Calu3 (cell line): ENCODE measurements at regions of chr20 and their contacts with region 1.

Region 1: DNA sequence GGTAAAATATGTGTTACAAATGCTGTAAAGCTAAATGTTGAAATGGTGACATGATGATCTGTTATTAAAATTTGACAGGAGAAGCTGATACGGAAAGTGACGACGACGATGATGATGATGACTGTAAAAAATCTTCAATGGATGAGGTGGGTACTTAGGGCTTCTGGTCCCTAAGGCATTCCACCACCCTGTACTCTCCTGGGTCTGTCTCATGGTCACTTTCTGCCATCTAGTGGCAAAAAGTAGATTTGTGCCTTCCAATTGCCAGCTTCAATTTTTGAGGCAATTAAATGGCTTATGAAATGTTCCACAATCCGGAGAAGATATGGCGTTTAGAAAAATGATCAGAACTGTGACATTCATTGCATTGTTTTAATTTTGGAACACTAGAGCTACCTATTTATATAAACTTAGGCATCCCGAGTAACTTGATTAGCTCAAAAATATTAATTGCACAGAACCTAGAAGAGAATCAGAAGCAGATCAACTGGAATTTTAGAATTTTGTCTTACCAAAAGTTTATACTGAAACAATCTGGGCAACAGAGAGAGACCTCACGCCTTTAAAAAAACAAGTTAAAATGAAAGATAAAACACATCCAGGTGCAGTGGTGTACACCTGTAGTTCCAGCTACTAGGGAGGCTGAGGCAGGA is 346.5 kb upstream of the PLCB4 start:
- DNase-seq: peak; percentile 33
- H3K4me3 Mint-ChIP-seq: no peak overlapping the region
- H3K27ac Mint-ChIP-seq: no peak overlapping the region
- H3K4me1 Mint-ChIP-seq: no peaks in the 10 kb centered on the region
- H3K27me3 Mint-ChIP-seq: no peaks in the 10 kb centered on the region
- CTCF ChIP-seq: peak; percentile 45

Region 2: DNA sequence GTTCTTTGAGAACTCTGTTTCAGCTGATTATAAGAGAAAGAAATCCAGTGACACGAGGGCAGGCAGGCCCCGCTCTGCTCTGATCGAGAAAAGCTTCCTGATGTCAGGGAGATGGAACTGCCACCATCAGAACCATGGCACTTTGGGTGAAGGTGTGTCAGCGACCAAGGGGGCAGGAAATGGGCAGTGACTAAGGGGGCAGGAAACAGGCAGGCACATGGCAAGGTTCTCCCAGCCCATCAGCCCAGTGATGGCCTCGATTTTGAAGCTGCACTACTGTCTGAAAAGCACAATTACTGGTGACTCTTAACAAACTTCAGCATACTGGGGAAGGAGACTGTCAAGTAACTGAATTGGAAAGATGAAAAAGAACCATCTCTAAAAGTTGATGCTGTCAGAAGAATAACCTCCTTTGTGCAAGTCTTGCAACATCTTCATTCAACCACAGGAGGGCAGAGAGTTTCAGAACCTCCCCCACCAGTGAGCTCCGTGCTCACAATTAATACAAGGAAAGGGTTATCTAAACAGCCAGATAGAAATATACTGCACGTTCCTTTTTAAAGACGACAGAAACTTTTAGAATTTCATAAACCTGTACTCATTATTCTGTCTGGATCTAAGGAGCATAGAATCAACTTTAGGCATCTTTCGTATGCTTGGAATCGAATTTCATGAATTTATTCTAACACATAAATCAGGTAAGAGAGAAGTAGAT is 741.9 kb before region 1 on chr20:
- CTCF ChIA-PET with region 1: interaction called, 8 read pairs
- intact Hi-C with region 1: loop called (anchors 1 kb)
- DNase-seq: peak; percentile 12
- H3K4me3 Mint-ChIP-seq: no peak overlapping the region
- H3K27ac Mint-ChIP-seq: no peak overlapping the region
- H3K4me1 Mint-ChIP-seq: peaks cover 7% of the 10 kb centered on the region
- H3K27me3 Mint-ChIP-seq: no peaks in the 10 kb centered on the region
- CTCF ChIP-seq: no peak

Region 3: DNA sequence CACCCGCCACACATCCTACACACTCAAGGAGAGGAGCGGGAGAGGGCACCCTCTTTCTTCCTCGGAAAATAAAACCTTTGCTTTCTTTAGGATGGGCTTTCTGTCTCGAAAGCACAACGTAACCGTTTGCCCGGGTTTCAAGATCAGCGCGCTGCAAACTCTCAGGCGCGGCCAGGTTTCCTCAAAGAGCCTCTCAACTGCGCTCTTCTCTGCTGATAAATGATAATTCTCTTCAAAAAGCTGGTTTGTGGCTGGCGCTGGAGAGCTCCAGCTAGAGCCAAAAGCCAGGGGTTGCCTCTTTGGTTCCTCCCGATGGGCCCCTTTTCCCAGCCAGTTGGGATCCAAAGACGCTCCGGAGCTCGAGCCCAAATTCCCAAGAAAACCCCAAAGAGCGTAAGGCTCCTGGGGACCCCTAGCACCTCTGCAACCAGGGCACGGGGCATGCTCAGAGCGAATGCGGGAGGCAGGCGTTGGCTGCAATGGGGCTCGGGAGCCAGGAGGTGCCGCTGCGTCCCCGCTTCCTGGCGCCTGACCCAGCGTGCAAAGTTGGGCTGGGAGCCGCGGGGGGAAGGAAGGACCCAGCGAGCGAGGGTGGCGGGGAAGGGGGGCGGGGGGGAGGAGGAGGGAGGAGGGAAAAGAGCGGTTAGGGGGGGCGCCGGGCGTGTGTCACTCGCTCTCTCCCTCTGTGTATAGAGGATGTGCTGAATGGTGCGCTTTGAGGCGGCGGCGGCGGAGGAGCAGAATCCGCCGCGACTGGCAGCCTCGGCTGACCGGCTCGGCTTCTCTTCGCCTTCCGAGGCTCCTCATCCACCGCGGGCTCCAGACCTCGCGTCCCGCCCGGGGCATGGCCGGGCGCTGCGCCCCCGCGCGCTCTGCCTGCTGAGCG is 590.6 kb before region 1 on chr20 and contains the start of gene PLCB1:
- CTCF ChIA-PET with region 1: interaction called, 7 read pairs
- intact Hi-C with region 1: loop called (anchors 1 kb)
- DNase-seq: peak; percentile 77
- H3K4me3 Mint-ChIP-seq: peak within 1 kb of the TSS; percentile 68
- H3K27ac Mint-ChIP-seq: no peak within 1 kb of the TSS
- H3K4me1 Mint-ChIP-seq: no peaks in the 10 kb centered on the region
- H3K27me3 Mint-ChIP-seq: peaks cover 61% of the 10 kb centered on the region
- CTCF ChIP-seq: peak; percentile 71
- total RNA-seq, gene PLCB1: 6.0 and 7.6 TPM in 2 replicates

Region 4: GRCh38 chr20:8389381-8390036 is 332.9 kb before region 1 on chr20:
- CTCF ChIA-PET with region 1: no interaction called
- intact Hi-C with region 1: loop called (anchors 5 kb)
- DNase-seq: no peak
- H3K4me3 Mint-ChIP-seq: no peak overlapping the region
- H3K27ac Mint-ChIP-seq: no peak overlapping the region
- H3K4me1 Mint-ChIP-seq: no peaks in the 10 kb centered on the region
- H3K27me3 Mint-ChIP-seq: no peaks in the 10 kb centered on the region
- CTCF ChIP-seq: no peak

Region 5: GRCh38 chr20:8583566-8584043 is 138.8 kb before region 1 on chr20:
- CTCF ChIA-PET with region 1: no interaction called
- intact Hi-C with region 1: no loop called
- DNase-seq: peak; percentile 1
- H3K4me3 Mint-ChIP-seq: no peak overlapping the region
- H3K27ac Mint-ChIP-seq: no peak overlapping the region
- H3K4me1 Mint-ChIP-seq: no peaks in the 10 kb centered on the region
- H3K27me3 Mint-ChIP-seq: no peaks in the 10 kb centered on the region
- CTCF ChIP-seq: no peak